GM12878 (cell line): ENCODE measurements at regions of chr2 and their contacts with region 1.

Region 1: DNA sequence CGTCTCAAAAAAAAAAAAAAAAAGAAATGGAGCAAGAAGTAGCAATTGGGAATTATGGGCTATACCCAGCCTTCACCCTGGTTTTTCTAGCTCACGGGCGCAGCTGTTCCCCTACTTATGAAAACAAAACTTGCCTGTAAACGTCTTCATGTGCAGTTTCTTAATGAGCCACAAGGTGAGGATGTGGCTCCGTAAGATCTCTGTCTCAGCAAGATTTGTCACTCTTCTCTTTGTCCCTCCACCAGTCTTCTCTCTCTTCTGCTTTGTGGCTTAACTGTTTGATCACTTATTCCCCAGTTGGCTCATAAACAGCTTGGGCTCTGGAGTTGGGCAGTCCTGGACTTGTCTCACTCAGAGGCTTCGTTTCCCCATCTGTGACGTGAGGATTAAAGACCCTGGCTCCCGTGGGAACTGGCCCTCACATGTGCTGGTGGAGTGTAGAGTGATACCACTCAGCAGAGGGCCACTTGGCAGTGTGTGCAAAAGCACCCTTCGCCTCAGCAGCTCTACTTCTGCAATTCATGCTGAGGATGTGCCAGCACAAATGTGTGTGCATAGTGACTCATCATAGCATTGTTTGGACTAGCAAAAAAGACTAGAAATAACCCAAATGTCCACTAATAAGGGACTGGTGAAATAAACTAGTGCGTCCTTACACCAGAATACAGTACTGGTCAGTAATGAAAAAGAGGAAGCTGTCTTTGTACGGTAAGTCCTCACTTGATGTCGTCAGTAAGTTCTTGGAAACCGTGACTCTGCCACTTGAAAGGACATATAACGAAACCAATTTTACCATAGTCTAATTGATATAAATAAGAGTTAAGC is 8.7 kb downstream of the CEP68 start:
- DNase-seq: peak; percentile 86
- ATAC-seq: peak; percentile 89
- H3K4me3 ChIP-seq: peak overlapping the region; percentile 35; the same call in 1 of the 2 replicates
- H3K27ac ChIP-seq: peak overlapping the region; percentile 53; the same call in 1 of the 2 replicates
- H3K4me1 ChIP-seq: peaks cover 12% of the 10 kb centered on the region
- H3K27me3 ChIP-seq: no peaks in the 10 kb centered on the region
- CTCF ChIP-seq: peak; percentile 87 to 98 (median 97)
- EP300 ChIP-seq: no peak
- POLR2A ChIP-seq: 0 out of 2 replicates have a peak, but pooled peaks have one; percentile 29
- RAD21 ChIP-seq: peak; percentile 98

Region 2: DNA sequence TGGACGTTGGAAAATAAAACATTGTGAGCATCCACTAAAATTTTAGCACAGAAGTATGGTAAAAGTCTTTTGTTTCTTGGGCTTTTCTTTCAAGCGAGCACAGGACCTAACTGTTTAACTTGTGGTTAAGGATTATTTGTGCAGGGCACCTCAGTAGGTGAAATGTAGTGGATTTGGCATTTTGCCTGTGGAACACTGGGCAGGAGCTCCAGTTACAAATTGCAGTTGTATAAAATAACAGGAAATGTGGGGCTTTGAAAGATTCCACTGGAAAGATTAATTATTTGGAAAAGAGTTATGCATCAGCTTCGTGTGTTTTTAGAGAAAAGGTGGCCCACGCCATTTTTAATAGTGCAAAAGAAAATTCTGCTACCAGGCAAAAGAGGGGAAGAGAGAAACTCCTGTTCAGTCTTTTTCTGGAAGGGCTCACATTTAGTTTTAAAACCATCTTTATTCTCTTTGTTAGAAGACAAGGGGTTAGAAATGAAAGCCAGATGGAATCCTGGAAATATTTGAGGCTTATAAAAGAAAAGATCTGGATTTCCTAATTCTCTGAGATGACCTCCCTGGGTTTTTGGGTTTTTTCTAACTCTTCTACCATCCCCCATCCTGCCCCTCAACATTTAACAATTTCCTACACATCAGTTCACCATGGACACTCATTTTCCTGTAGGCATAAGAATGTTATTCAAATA is 266.9 kb before region 1 on chr2:
- CTCF ChIA-PET with region 1: no interaction called
- POLR2A ChIA-PET with region 1: no interaction called
- RAD21 ChIA-PET with region 1: no interaction called
- SMC1A ChIA-PET with region 1: no interaction called
- in situ Hi-C with region 1: no loop called
- intact Hi-C with region 1: no loop called
- DNase-seq: no peak
- ATAC-seq: no peak
- H3K4me3 ChIP-seq: no peak overlapping the region
- H3K27ac ChIP-seq: no peak overlapping the region
- H3K4me1 ChIP-seq: no peaks in the 10 kb centered on the region
- H3K27me3 ChIP-seq: no peaks in the 10 kb centered on the region
- CTCF ChIP-seq: no peak
- EP300 ChIP-seq: no peak
- POLR2A ChIP-seq: no peak
- RAD21 ChIP-seq: no peak

Region 3: GRCh38 chr2:65085148-65085547 is 20.2 kb after region 1 on chr2:
- CTCF ChIA-PET with region 1: interaction called, 18 read pairs
- POLR2A ChIA-PET with region 1: no interaction called
- RAD21 ChIA-PET with region 1: interaction called, 6 read pairs
- SMC1A ChIA-PET with region 1: interaction called, 8 read pairs
- in situ Hi-C with region 1: no loop called
- intact Hi-C with region 1: no loop called
- DNase-seq: no peak
- ATAC-seq: no peak
- H3K4me3 ChIP-seq: no peak overlapping the region
- H3K27ac ChIP-seq: no peak overlapping the region
- H3K4me1 ChIP-seq: no peaks in the 10 kb centered on the region
- H3K27me3 ChIP-seq: no peaks in the 10 kb centered on the region
- CTCF ChIP-seq: no peak
- EP300 ChIP-seq: no peak
- POLR2A ChIP-seq: no peak
- RAD21 ChIP-seq: no peak

Region 4: GRCh38 chr2:65142515-65142914 is 77.6 kb after region 1 on chr2:
- CTCF ChIA-PET with region 1: interaction called, 15 read pairs
- POLR2A ChIA-PET with region 1: no interaction called
- RAD21 ChIA-PET with region 1: interaction called, 5 read pairs
- SMC1A ChIA-PET with region 1: interaction called, 3 read pairs
- in situ Hi-C with region 1: no loop called
- intact Hi-C with region 1: no loop called
- DNase-seq: no peak
- ATAC-seq: peak; percentile 72
- H3K4me3 ChIP-seq: no peak overlapping the region
- H3K27ac ChIP-seq: no peak overlapping the region
- H3K4me1 ChIP-seq: no peaks in the 10 kb centered on the region
- H3K27me3 ChIP-seq: no peaks in the 10 kb centered on the region; a peak in 1 of 4 replicates
- CTCF ChIP-seq: peak; percentile 16 to 30 (median 24); a peak in 2 of 6 replicates
- EP300 ChIP-seq: no peak
- POLR2A ChIP-seq: no peak
- RAD21 ChIP-seq: no peak; the same call in 1 of the 2 replicates

Region 5: GRCh38 chr2:65169760-65170136 is 104.8 kb after region 1 on chr2:
- CTCF ChIA-PET with region 1: interaction called, 97 read pairs
- POLR2A ChIA-PET with region 1: interaction called, 14 read pairs
- RAD21 ChIA-PET with region 1: interaction called, 46 read pairs
- SMC1A ChIA-PET with region 1: interaction called, 26 read pairs
- in situ Hi-C with region 1: loop called (anchors 10 kb)
- intact Hi-C with region 1: loop called (anchors 1 kb)
- DNase-seq: no peak
- ATAC-seq: no peak
- H3K4me3 ChIP-seq: no peak overlapping the region
- H3K27ac ChIP-seq: no peak overlapping the region
- H3K4me1 ChIP-seq: no peaks in the 10 kb centered on the region; the same call in 1 of the 2 replicates
- H3K27me3 ChIP-seq: no peaks in the 10 kb centered on the region
- CTCF ChIP-seq: no peak
- EP300 ChIP-seq: no peak
- POLR2A ChIP-seq: no peak
- RAD21 ChIP-seq: no peak

Region 6: GRCh38 chr2:65227425-65228262 is 162.7 kb after region 1 on chr2 and contains the start of gene ACTR2:
- CTCF ChIA-PET with region 1: interaction called, 9 read pairs
- POLR2A ChIA-PET with region 1: interaction called, 5 read pairs
- RAD21 ChIA-PET with region 1: interaction called, 11 read pairs
- SMC1A ChIA-PET with region 1: no interaction called
- in situ Hi-C with region 1: no loop called
- intact Hi-C with region 1: no loop called
- DNase-seq: peak; percentile 90
- ATAC-seq: peak; percentile 92
- H3K4me3 ChIP-seq: peak within 1 kb of the TSS; percentile 97
- H3K27ac ChIP-seq: peak within 1 kb of the TSS; percentile 98
- H3K4me1 ChIP-seq: peaks cover 12% of the 10 kb centered on the region
- H3K27me3 ChIP-seq: no peaks in the 10 kb centered on the region
- CTCF ChIP-seq: no peak
- EP300 ChIP-seq: 0 out of 4 replicates have a peak, but pooled peaks of 1 of the 2 experiments have one; percentile 22
- POLR2A ChIP-seq: peak; percentile 98
- RAD21 ChIP-seq: no peak
- polyA plus RNA-seq, gene ACTR2: 94.2 to 124 TPM

Region 7: GRCh38 chr2:65576861-65577601 is 512.1 kb after region 1 on chr2:
- CTCF ChIA-PET with region 1: interaction called, 21 read pairs
- POLR2A ChIA-PET with region 1: no interaction called
- RAD21 ChIA-PET with region 1: interaction called, 8 read pairs
- SMC1A ChIA-PET with region 1: interaction called, 15 read pairs
- in situ Hi-C with region 1: no loop called
- intact Hi-C with region 1: loop called (anchors 1 kb)
- DNase-seq: no peak
- ATAC-seq: no peak
- H3K4me3 ChIP-seq: no peak overlapping the region
- H3K27ac ChIP-seq: no peak overlapping the region
- H3K4me1 ChIP-seq: peaks cover 3% of the 10 kb centered on the region; the same call in 1 of the 2 replicates
- H3K27me3 ChIP-seq: no peaks in the 10 kb centered on the region; a peak in 1 of 4 replicates
- CTCF ChIP-seq: no peak
- EP300 ChIP-seq: no peak
- POLR2A ChIP-seq: no peak
- RAD21 ChIP-seq: no peak